A673 (cell line): ENCODE measurements at regions of chr11 and their contacts with region 1.

Region 1: DNA sequence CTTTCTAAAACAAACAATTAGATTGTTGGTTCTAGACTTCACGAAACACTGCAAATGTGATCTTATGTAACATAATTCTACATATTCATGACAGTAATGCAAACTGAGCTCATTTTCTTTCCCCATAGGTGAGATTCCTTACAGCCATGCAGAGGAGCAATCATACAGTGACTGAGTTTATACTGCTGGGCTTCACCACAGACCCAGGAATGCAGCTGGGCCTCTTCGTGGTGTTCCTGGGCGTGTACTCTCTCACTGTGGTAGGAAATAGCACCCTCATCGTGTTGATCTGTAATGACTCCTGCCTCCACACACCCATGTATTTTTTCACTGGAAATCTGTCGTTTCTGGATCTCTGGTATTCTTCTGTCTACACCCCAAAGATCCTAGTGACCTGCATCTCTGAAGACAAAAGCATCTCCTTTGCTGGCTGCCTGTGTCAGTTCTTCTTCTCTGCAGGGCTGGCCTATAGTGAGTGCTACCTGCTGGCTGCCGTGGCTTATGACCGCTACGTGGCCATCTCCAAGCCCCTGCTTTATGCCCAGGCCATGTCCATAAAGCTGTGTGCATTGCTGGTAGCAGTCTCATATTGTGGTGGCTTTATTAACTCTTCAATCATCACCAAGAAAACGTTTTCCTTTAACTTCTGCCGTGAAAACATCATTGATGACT is 1.5 kb downstream of the OR9G1 start:
- DNase-seq: peak; percentile 11
- H3K4me3 ChIP-seq: no peak overlapping the region
- H3K27ac ChIP-seq: no peak overlapping the region
- H3K4me1 ChIP-seq: no peaks in the 10 kb centered on the region
- H3K27me3 ChIP-seq: no peaks in the 10 kb centered on the region
- CTCF ChIP-seq: no peak

Region 2: DNA sequence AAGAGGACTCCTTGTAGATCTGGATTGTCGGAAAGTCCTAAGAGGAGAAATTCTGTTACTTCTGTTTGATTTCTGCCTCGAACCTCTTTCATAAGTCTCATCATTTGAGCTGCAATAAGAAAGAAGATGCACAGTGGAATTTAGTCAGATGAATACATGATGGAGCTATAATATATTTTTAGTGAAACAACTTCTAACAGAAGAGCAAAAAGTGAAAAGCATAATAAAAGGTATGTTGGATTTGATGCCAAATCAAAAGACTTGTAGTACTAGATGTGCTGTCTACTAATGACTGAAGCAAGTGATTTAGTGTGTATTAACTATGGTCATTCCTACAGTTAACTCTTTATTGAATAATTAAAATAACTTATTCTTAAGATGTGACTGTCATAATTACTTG is 58.0 kb before region 1 on chr11 and contains the start of gene OR5AP2:
- CTCF ChIA-PET with region 1: no interaction called
- POLR2A ChIA-PET with region 1: no interaction called
- intact Hi-C with region 1: loop called (anchors 10 kb)
- DNase-seq: no peak
- H3K4me3 ChIP-seq: no peak within 1 kb of the TSS
- H3K27ac ChIP-seq: no peak within 1 kb of the TSS
- H3K4me1 ChIP-seq: no peaks in the 10 kb centered on the region
- H3K27me3 ChIP-seq: no peaks in the 10 kb centered on the region
- CTCF ChIP-seq: no peak
- total RNA-seq, gene OR5AP2: not detected in 2 replicates

Region 3: GRCh38 chr11:56817661-56818060 is 117.3 kb after region 1 on chr11:
- CTCF ChIA-PET with region 1: no interaction called
- POLR2A ChIA-PET with region 1: no interaction called
- intact Hi-C with region 1: loop called (anchors 10 kb)
- DNase-seq: no peak
- H3K4me3 ChIP-seq: no peak overlapping the region
- H3K27ac ChIP-seq: no peak overlapping the region
- H3K4me1 ChIP-seq: no peaks in the 10 kb centered on the region
- H3K27me3 ChIP-seq: no peaks in the 10 kb centered on the region
- CTCF ChIP-seq: no peak